Activated T-helper 1 cell treated with anti-CD3 and anti-CD28 coated beads, Interleukin-12 subunit alpha, Interleukin-12 subunit beta, Interleukin-2, Interleukin-4 antibody, amounts not matched to agents 30 ng/mL and 10 ng/mL and 1 ng/mL, durations not matched to agents 14 hours and 24 hours and 36 hours (primary cell): ENCODE measurements at regions of chr1 and their contacts with region 1.

Region 1: DNA sequence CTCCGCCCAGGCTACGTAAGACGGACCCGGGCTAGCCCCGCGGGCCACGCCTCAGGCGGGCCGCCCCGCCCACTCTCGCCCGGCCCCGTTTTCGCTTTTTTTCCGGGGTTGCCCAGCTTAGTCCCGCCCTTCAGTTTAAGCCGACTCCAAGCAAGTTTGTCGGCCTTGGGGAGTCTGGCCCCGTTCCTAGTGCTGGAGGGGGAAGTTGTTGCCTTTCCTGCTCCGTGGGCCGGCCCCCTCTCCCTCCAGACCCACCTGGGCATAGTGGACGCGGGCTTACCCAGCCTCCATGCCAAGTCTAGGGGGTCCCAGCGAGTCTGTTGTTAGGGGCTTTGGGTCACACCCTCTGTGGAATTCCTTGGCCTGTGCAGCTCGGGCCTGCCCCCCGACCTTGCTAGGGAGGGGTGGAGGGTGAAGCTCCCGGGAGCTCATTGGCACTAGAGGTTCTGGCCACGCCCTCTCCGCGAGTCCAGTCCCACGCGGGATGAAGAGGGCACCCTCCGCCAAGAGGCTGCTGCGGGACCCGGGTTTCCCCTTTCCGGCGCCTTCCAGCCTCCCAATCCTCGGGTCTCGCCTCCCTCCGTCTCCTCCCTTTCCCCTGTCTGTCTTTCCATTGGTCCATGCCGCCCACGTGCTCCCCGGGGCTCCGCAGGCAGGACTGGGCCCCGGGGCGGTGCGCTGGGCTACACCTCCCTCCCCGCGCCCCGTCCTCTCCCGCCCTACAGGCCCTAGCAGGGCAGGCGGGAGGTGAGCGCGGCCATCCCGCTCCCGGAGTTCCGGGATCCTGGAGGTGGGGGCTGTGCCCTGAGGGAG is 3.3 kb downstream of the RUSC1 start:
- DNase-seq: peak; percentile 90
- H3K4me3 Mint-ChIP-seq: peak overlapping the region; percentile 86
- H3K27ac Mint-ChIP-seq: peak overlapping the region; percentile 75
- H3K4me1 Mint-ChIP-seq: peaks cover 40% of the 10 kb centered on the region
- H3K27me3 Mint-ChIP-seq: no peaks in the 10 kb centered on the region

Region 2: GRCh38 chr1:155208541-155209311 is 115.3 kb before region 1 on chr1 and contains the start of gene MTX1:
- intact Hi-C with region 1: loop called (anchors 2 kb)
- DNase-seq: peak; percentile 85
- H3K4me3 Mint-ChIP-seq: peak within 1 kb of the TSS; percentile 93
- H3K27ac Mint-ChIP-seq: peak within 1 kb of the TSS; percentile 97
- H3K4me1 Mint-ChIP-seq: peaks cover 25% of the 10 kb centered on the region
- H3K27me3 Mint-ChIP-seq: no peaks in the 10 kb centered on the region
- total RNA-seq, gene MTX1: 61.8 and 62.3 TPM in 2 replicates

Region 3: DNA sequence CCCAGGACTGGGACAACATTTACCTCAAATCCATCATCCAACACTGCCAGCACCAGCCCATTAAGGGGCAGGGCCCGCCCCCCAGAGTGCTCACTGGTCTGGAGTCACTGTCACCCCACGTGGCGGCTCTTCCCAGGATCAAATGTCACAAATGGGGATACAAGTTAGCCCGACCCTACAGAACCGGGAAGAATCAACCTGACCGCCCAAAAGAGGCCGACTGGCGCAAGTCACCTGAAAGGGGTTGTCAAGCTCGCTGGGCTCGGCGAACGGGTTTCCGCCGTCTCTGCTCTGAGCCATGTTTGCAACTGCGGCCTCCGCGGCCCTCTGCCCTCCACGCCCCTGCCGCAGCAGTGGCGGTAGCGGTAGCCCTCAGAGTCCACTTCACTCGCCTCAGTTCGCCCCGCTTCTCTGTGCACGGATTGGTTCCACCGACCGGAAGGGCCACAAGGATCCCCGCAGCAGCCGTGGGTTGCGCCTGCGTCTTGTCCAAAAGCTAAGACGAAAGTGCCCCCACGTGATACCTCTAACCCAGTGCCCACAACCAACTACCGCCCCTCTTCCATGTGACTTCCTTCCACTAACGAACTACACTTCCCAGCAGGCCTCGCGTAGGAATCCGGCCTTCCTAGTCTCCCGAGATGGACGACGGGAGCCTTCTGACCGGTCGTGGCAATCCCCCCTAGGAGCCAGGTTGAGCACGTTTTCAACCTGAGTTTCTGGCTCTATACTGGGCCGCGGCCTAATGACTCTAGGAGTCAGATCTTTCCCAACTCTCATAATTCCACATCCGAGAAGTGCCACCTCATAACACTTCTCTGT is 61.9 kb before region 1 on chr1 and contains the start of gene SCAMP3:
- intact Hi-C with region 1: loop called (anchors 1 kb)
- DNase-seq: peak; percentile 88
- H3K4me3 Mint-ChIP-seq: peak within 1 kb of the TSS; percentile 90
- H3K27ac Mint-ChIP-seq: peak within 1 kb of the TSS; percentile 88
- H3K4me1 Mint-ChIP-seq: peaks cover 38% of the 10 kb centered on the region
- H3K27me3 Mint-ChIP-seq: no peaks in the 10 kb centered on the region
- total RNA-seq, gene SCAMP3: 147 and 168 TPM in 2 replicates

Region 4: DNA sequence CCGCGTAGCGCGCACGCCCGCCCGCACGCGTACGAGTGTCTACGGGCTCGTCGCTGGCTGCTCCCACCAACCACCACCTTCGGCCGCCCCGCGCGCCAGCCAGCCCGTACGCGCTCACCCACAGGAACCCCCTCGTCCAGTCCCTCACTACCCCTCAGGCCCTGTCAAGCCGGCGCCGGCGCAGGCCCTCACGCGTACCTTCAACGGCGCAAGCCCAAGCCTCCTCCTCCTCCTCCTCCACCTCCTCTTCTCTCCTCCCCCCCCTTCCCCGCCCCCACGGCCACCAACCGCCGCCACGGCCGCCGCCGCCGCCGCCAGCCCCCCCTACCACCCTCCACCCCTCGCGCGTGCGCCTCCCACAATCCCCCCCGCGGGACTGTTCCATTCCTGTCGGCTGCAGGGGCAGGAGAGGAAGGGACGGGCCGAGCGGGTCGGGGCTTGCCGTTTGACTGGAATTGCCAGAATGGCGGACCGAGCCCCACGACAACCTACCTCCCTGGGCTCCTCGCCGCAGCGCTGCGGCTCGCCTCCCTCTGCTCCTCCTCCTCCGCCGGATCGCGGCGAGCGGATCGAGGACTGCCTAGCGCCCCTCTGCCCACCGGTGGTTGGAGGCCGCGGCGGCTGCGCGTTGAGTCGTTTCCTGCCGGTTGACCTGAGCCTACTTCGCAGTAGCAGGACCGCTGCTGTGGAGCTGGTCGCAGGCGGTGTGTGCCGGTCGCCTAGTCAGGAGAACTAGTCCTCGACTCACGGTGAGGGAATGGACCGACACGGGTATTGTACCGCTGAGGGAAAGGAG is 238.8 kb after region 1 on chr1 and contains the start of gene ASH1L:
- intact Hi-C with region 1: loop called (anchors 1 kb)
- DNase-seq: peak; percentile 85
- H3K4me3 Mint-ChIP-seq: peak within 1 kb of the TSS; percentile 96
- H3K27ac Mint-ChIP-seq: peak within 1 kb of the TSS; percentile 99
- H3K4me1 Mint-ChIP-seq: peaks cover 24% of the 10 kb centered on the region
- H3K27me3 Mint-ChIP-seq: no peaks in the 10 kb centered on the region
- total RNA-seq, gene ASH1L: 44.0 and 45.4 TPM in 2 replicates

Region 5: GRCh38 chr1:155978325-155978972 is 654.4 kb after region 1 on chr1 and contains the start of gene ARHGEF2:
- intact Hi-C with region 1: loop called (anchors 5 kb)
- DNase-seq: peak; percentile 71
- H3K4me3 Mint-ChIP-seq: peak within 1 kb of the TSS; percentile 92
- H3K27ac Mint-ChIP-seq: peak within 1 kb of the TSS; percentile 95
- H3K4me1 Mint-ChIP-seq: peaks cover 78% of the 10 kb centered on the region
- H3K27me3 Mint-ChIP-seq: no peaks in the 10 kb centered on the region
- total RNA-seq, gene ARHGEF2: 221 and 222 TPM in 2 replicates